ENCODE measurements at regions of chr5 and their contacts with region 1.

Region 1: DNA sequence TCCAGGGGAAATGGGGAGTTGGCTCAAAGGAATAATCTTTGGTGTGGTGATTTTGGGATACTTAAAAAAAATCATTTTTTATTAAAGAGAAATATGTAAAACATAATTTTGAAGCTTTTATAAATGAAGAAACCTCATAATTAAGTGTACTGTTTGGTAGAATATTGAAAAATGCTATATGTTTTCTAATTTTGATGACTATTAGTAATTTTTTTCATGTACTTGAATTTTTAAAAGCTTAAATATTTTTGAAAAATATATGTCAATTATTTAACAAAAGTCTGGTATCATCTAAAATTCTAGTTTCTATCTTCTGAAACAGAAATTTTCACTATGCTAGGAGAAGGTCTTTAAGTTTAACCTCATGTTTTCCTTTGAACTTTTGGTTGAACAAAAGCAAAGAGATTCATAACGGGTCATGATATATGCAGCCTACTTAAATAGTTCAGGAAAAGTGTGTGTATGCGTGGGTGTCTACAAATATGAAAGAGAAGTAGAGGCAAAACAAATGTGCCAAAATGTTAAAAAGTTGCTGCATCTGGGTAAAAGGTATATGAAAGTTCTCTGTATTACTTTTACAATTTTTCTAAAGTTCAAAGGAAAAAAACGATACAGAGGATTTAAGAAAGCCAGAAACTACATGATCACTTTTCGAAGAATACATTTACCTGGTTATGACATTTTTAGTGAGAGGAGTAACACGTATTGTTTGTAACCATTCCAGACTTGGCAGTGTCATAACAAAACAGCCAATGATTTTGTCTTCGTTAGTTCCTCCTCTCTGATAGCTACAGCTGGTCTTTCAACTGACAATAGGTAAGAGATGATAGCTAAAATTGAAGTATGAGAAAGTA is 117.3 kb upstream of the TNFAIP8 start:
- DNase-seq: peak in 6 of 9 donors; percentile 10 to 66 (median 56)
- ATAC-seq: peak; percentile 81
- H3K4me3 ChIP-seq: peak overlapping the region; percentile 2
- H3K4me3 Mint-ChIP-seq: peak overlapping the region; percentile 13 to 82 (median 66)
- H3K27ac ChIP-seq: peak overlapping the region; percentile 67
- H3K27ac Mint-ChIP-seq: peak overlapping the region in 8 of 9 donors; percentile 85 to 94 (median 90)
- H3K4me1 ChIP-seq: peaks cover 0 to 17% of the 10 kb centered on the region in 2 donors
- H3K4me1 Mint-ChIP-seq: peaks cover 7 to 57% (median 47%) of the 10 kb centered on the region in 7 donors
- H3K27me3 ChIP-seq: no peaks in the 10 kb centered on the region
- H3K27me3 Mint-ChIP-seq: no peaks in the 10 kb centered on the region

Region 2: GRCh38 chr5:119200795-119201194 is 37.7 kb before region 1 on chr5:
- CTCF ChIA-PET with region 1: no interaction called
- POLR2A ChIA-PET with region 1: no interaction called
- intact Hi-C with region 1: no loop called
- DNase-seq: no peak
- ATAC-seq: no peak
- H3K4me3 ChIP-seq: no peak overlapping the region
- H3K4me3 Mint-ChIP-seq: no peak overlapping the region
- H3K27ac ChIP-seq: no peak overlapping the region
- H3K27ac Mint-ChIP-seq: peak overlapping the region in 2 of 9 donors; percentile 9 to 51
- H3K4me1 ChIP-seq: no peaks in the 10 kb centered on the region
- H3K4me1 Mint-ChIP-seq: peaks cover 0 to 23% (median 15%) of the 10 kb centered on the region in 7 donors
- H3K27me3 ChIP-seq: no peaks in the 10 kb centered on the region
- H3K27me3 Mint-ChIP-seq: no peaks in the 10 kb centered on the region

Region 3: GRCh38 chr5:119220576-119221197 is 17.8 kb before region 1 on chr5:
- CTCF ChIA-PET with region 1: no interaction called
- POLR2A ChIA-PET with region 1: no interaction called
- intact Hi-C with region 1: loop called in 1 of 2 experiments (anchors 2 kb)
- DNase-seq: no peak
- ATAC-seq: no peak
- H3K4me3 ChIP-seq: no peak overlapping the region
- H3K4me3 Mint-ChIP-seq: no peak overlapping the region
- H3K27ac ChIP-seq: no peak overlapping the region
- H3K27ac Mint-ChIP-seq: peak overlapping the region in 1 of 9 donors; percentile 18
- H3K4me1 ChIP-seq: no peaks in the 10 kb centered on the region
- H3K4me1 Mint-ChIP-seq: peaks cover 0 to 8% (median 0%) of the 10 kb centered on the region in 7 donors
- H3K27me3 ChIP-seq: no peaks in the 10 kb centered on the region
- H3K27me3 Mint-ChIP-seq: no peaks in the 10 kb centered on the region

Region 4: GRCh38 chr5:119255571-119256356 is 17.3 kb after region 1 on chr5:
- CTCF ChIA-PET with region 1: no interaction called
- POLR2A ChIA-PET with region 1: no interaction called
- intact Hi-C with region 1: loop called in 1 of 2 experiments (anchors 2 kb)
- DNase-seq: no peak
- ATAC-seq: peak; percentile 59
- H3K4me3 ChIP-seq: no peak overlapping the region
- H3K4me3 Mint-ChIP-seq: no peak overlapping the region
- H3K27ac ChIP-seq: no peak overlapping the region
- H3K27ac Mint-ChIP-seq: no peak overlapping the region
- H3K4me1 ChIP-seq: no peaks in the 10 kb centered on the region
- H3K4me1 Mint-ChIP-seq: peaks cover 0 to 5% (median 1%) of the 10 kb centered on the region in 7 donors
- H3K27me3 ChIP-seq: no peaks in the 10 kb centered on the region
- H3K27me3 Mint-ChIP-seq: no peaks in the 10 kb centered on the region

Measured in naive thymus-derived CD4-positive, alpha-beta T cell (primary cell).